Adrenal gland (tissue), 19 donors: ENCODE measurements at regions of chr1 and their contacts with region 1.

Region 1: DNA sequence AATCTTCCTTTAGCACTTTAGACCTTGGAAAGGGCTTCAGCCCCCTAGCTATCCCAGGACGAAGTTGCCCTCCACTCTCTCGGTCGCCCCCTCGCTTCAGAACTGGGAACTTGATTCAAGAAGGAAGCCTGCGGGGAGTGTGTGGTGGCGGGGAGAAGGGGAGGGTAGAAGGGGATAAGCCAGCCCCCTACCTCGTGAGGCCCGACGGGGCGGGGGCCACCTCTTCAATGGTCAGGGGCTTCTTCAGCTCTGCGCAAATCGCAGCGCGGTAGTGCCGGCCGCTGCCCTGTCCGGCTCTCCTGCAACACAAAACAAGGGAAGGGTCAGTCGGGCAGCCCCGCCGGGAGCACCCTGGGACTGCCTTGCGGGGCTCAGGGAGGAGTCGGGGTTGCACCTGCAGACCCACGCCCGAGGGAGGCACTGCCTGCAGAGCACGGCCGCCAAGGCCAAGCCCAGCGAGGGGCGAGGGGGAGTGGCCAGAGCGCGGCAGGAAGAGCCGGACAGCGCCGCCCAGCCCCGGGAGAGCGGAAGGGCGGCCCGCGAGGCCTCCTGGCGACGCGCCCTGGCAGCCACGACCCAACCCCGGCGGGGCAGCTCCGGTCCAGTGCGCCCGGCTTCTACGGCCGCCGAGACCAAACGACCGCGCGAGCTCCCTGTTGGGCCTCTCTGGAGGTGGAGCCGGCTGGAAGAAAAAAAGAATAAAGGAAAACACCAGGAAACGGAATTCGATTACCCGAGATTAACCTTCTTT is 56.2 kb upstream of the RASAL2 start:
- DNase-seq: peak; percentile 86 to 90 (median 88)
- H3K4me3 ChIP-seq: peak overlapping the region; percentile 64 to 88 (median 84)
- H3K27ac ChIP-seq: peak overlapping the region; percentile 13 to 82 (median 52)
- H3K4me1 ChIP-seq: no peaks in the 10 kb centered on the region
- H3K27me3 ChIP-seq: no peaks in the 10 kb centered on the region
- CTCF ChIP-seq: peak; percentile 32 to 57 (median 49)
- POLR2A ChIP-seq: peak; percentile 9 to 55

Region 2: GRCh38 chr1:178093205-178093957 is 55.7 kb after region 1 on chr1:
- intact Hi-C with region 1: loop called in 1 of 2 experiments (anchors 5 kb)
- DNase-seq: peak; percentile 93 to 96 (median 94)
- H3K4me3 ChIP-seq: peak overlapping the region; percentile 73 to 96 (median 81)
- H3K27ac ChIP-seq: peak overlapping the region; percentile 24 to 88 (median 79)
- H3K4me1 ChIP-seq: peaks cover 3 to 23% of the 10 kb centered on the region in 2 donors
- H3K27me3 ChIP-seq: no peaks in the 10 kb centered on the region
- CTCF ChIP-seq: peak in 2 of 6 experiments; percentile 2 to 14
- POLR2A ChIP-seq: no peak